ENCODE measurements at regions of chr14 and their contacts with region 1.

Region 1: GRCh38 chr14:75577729-75578101 is 705 bp upstream of the FLVCR2 start:
- DNase-seq: peak; percentile 92
- H3K4me3 ChIP-seq: peak overlapping the region; percentile 44 to 61 (median 54)
- H3K27ac ChIP-seq: peak overlapping the region; percentile 75 to 85 (median 83)
- H3K4me1 ChIP-seq: peaks cover 0 to 29% (median 20%) of the 10 kb centered on the region in 4 donors
- H3K27me3 ChIP-seq: no peaks in the 10 kb centered on the region
- CTCF ChIP-seq: peak in 3 of 4 experiments; percentile 70 to 77 (median 70)
- EP300 ChIP-seq: no peak
- POLR2A ChIP-seq: no peak

Region 2: DNA sequence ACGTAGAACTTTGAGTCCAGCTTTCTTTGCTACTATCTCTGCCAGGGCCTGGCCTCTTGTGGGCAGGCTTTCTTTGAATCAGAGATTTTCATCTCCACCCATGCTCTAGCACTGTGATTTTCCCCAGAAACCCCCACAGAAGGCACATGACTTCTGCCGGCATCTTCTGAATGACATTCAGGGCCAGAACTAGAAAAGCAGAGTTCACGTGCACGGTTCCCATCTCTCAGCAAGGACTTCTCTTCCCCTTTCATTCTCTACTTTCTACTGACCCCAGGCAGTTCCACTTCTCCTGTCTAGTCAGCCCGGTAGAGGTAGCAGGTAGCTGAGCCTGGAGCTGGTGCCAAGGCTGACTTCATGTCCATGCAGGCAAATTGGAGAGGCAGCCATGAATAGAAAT is 28.5 kb before region 1 on chr14:
- intact Hi-C with region 1: no loop called
- DNase-seq: no peak
- H3K4me3 ChIP-seq: no peak overlapping the region
- H3K27ac ChIP-seq: peak overlapping the region in 1 of 4 donors; percentile 21
- H3K4me1 ChIP-seq: peaks cover 0 to 53% (median 18%) of the 10 kb centered on the region in 4 donors
- H3K27me3 ChIP-seq: no peaks in the 10 kb centered on the region
- CTCF ChIP-seq: no peak
- EP300 ChIP-seq: no peak
- POLR2A ChIP-seq: no peak

Region 3: DNA sequence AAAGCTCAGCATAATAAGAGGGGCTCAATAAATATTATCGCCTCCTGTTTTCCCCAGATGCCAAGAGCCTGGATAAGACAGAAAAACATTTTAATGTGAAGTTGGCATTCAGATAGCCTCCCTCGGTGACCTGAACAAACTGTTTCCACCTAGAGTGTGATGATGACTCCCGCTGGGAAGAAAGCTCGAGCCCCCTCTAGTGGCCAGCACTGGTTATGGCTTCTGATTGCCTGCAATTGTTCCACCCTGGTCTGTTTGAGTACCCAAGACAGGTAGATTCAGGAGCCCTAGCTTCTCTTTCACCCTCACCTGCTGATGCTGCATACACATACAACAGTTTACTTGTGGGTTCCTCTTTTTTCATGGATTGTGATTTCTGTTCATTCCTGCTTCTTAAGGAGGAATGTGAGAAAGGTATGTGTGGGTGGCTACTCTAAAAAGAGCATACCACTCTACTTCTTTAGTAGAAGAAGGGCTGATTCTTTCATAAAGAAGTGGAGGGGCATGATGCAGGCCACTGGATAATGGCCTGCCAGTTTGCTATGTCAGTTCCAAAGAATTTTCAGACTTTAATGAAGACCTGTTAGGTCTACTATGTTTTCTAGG is 76.5 kb after region 1 on chr14:
- intact Hi-C with region 1: loop called (anchors 1 kb)
- DNase-seq: peak; percentile 85
- H3K4me3 ChIP-seq: no peak overlapping the region
- H3K27ac ChIP-seq: no peak overlapping the region
- H3K4me1 ChIP-seq: peaks cover 0 to 4% (median 0%) of the 10 kb centered on the region in 4 donors
- H3K27me3 ChIP-seq: no peaks in the 10 kb centered on the region
- CTCF ChIP-seq: peak; percentile 79 to 95 (median 92)
- EP300 ChIP-seq: no peak
- POLR2A ChIP-seq: no peak

Region 4: GRCh38 chr14:75982266-75983018 is 404.7 kb after region 1 on chr14:
- intact Hi-C with region 1: loop called (anchors 5 kb)
- DNase-seq: peak; percentile 92
- H3K4me3 ChIP-seq: peak overlapping the region; percentile 60 to 81 (median 74)
- H3K27ac ChIP-seq: peak overlapping the region; percentile 94 to 99 (median 96)
- H3K4me1 ChIP-seq: peaks cover 0 to 68% (median 58%) of the 10 kb centered on the region in 4 donors
- H3K27me3 ChIP-seq: no peaks in the 10 kb centered on the region
- CTCF ChIP-seq: peak in 3 of 4 experiments; percentile 34 to 77 (median 47)
- EP300 ChIP-seq: no peak
- POLR2A ChIP-seq: no peak

Region 5: DNA sequence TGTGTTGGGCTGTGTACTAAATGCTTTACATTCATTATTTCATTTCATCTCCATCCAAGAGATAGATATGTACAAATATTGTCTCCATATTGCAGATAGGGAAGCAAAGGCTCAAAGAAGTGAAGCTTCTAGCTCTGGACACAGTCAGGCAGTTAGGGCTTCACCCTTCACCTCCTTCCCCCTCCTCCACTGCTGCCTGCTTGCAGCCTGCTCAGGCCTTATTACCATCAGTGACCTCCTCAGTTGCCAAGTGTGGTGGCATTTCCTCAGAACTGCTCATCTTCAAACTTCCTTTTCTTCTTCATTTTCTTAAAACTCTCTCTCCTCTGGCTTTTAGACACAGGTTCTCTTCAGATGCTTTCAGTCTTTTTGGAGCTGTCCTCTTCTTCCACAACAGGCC is 569.3 kb after region 1 on chr14:
- intact Hi-C with region 1: no loop called
- DNase-seq: no peak
- H3K4me3 ChIP-seq: no peak overlapping the region
- H3K27ac ChIP-seq: no peak overlapping the region
- H3K4me1 ChIP-seq: no peaks in the 10 kb centered on the region
- H3K27me3 ChIP-seq: no peaks in the 10 kb centered on the region
- CTCF ChIP-seq: no peak
- EP300 ChIP-seq: no peak
- POLR2A ChIP-seq: no peak

Region 6: GRCh38 chr14:76293923-76294322 is 716.2 kb after region 1 on chr14:
- intact Hi-C with region 1: no loop called
- DNase-seq: no peak
- H3K4me3 ChIP-seq: no peak overlapping the region
- H3K27ac ChIP-seq: no peak overlapping the region
- H3K4me1 ChIP-seq: no peaks in the 10 kb centered on the region
- H3K27me3 ChIP-seq: no peaks in the 10 kb centered on the region
- CTCF ChIP-seq: no peak
- EP300 ChIP-seq: no peak
- POLR2A ChIP-seq: no peak